ENCODE measurements at regions of chr3 and their contacts with region 1.

Region 1: DNA sequence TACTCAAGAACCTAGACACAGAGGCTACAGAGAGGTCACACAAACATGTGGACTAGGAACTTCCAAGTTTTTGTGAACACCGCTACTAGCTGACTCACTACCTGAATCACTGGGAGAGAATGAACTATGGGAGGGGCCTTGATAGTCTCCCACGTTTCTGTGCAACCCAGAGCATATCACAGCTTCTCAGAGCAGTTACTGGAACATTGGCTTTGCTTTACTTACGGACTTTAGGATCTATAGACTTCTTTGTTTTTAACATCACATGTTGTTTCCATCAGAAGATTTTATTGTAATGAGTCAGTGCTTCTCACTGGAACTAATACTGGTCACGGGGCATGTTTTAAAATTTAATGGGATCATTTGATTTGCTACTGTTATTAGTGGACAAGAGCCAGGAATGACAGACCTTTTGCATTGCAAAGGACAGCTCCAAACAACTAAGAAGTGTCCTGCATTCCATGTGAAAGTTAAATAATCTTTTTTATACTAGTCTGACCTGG is 35.6 kb downstream of the RTP4 start:
- DNase-seq: peak; percentile 68 to 82
- H3K4me3 ChIP-seq: no peak overlapping the region
- H3K27ac ChIP-seq: peak overlapping the region; percentile 36; the same call in 1 of the 2 replicates
- H3K4me1 ChIP-seq: peaks cover 15% of the 10 kb centered on the region
- H3K27me3 ChIP-seq: no peaks in the 10 kb centered on the region
- CTCF ChIP-seq: no peak

Region 2: GRCh38 chr3:187450431-187451190 is 46.8 kb after region 1 on chr3:
- CTCF ChIA-PET with region 1: interaction called, 16 read pairs
- POLR2A ChIA-PET with region 1: no interaction called
- intact Hi-C with region 1: no loop called
- DNase-seq: no peak
- H3K4me3 ChIP-seq: no peak overlapping the region
- H3K27ac ChIP-seq: no peak overlapping the region
- H3K4me1 ChIP-seq: no peaks in the 10 kb centered on the region
- H3K27me3 ChIP-seq: peaks cover 24% of the 10 kb centered on the region; the same call in 1 of the 2 replicates
- CTCF ChIP-seq: no peak

Region 3: DNA sequence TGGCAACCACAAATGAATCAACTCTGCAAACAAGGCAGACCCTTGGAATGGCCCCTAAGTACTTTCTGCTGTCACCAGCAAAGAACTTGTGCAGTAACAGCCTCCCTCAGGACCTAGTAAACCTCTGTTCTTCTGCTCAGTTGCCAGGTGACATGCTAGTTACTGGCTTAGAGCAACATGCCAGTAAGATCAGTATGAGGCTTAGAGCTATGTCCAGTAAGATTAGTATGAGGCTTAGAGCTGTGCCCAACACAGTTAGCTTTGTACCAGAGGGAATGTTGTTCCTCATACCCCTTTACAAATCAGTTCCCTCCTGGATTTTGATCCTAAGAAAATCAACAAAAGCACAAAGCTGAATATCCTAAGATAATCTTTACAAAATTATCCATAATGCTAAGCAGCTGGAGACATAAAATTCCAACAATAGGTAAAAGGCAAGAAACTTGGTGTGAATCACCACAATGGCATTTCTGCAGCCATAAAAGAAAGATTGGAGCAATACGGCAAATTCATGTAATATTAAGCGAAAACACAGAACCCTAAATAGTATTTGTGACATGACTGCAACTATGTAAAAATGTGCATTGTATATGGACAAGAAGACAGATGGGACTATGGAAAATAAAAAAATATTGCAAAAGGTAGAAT is 642.9 kb after region 1 on chr3:
- CTCF ChIA-PET with region 1: no interaction called
- POLR2A ChIA-PET with region 1: interaction called, 13 read pairs
- intact Hi-C with region 1: no loop called
- DNase-seq: peak in 1 of 2 experiments; percentile 57
- H3K4me3 ChIP-seq: no peak overlapping the region
- H3K27ac ChIP-seq: no peak overlapping the region
- H3K4me1 ChIP-seq: peaks cover 28% of the 10 kb centered on the region
- H3K27me3 ChIP-seq: no peaks in the 10 kb centered on the region
- CTCF ChIP-seq: no peak